CD8-positive, alpha-beta T cell (primary cell): ENCODE measurements at regions of chr13 and their contacts with region 1.

Region 1: GRCh38 chr13:99386911-99387788 is 80.0 kb upstream of the GPR183 start:
- DNase-seq: peak; percentile 77 to 95 (median 87)
- ATAC-seq: peak; percentile 21
- H3K4me3 ChIP-seq: no peak overlapping the region
- H3K4me3 Mint-ChIP-seq: peak overlapping the region; percentile 27
- H3K27ac ChIP-seq: peak overlapping the region in 1 of 2 experiments; percentile 51
- H3K27ac Mint-ChIP-seq: peak overlapping the region; percentile 98
- H3K4me1 ChIP-seq: peaks cover 65% of the 10 kb centered on the region
- H3K4me1 Mint-ChIP-seq: peaks cover 71% of the 10 kb centered on the region
- H3K27me3 ChIP-seq: no peaks in the 10 kb centered on the region
- H3K27me3 Mint-ChIP-seq: no peaks in the 10 kb centered on the region
- CTCF ChIP-seq: peak; percentile 95

Region 2: DNA sequence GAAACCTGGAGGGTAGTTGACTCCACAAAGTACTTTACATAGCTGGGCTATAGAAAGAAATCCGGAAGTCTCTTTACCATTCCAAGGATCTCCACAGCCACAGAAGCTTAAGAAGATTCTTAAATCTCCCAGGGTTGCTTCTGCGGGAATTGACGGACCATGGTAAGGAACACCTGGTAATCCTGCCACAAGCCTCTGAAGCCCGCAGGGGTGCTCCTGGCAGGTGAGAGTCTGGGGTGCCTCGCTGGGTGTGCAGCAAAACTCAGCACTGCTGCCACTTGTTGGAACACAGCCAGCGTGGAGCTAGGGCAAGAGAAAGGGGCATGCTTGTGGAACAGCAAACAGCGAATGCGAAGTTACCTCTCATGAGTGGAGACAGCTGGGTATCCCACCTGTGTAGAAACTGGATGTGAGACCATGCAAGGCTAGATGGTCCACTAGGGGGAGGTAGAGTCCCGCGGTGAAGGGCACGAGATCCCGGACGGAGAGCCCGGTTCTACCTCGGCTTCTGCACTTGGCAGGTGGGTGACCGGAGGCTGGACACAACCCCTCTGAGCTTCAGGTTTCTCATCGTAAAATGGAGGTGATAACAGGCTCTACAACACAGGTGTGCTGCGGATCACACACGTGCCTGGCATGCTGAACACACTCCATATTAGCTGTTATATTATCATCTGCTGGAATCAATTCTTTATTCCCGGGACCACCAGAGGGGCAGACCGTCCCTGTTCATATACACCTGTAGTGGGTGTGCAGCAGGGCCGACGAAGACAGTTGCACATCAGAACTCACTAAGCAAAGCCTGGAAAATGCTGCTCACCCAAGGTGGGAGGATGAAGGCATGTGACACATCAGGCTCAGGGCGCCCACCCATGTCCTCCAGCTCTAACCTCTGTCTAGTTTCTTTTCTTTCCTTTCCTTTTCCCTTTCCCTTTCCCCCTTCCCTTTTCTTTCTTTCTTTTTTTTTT is 210.6 kb before region 1 on chr13:
- CTCF ChIA-PET with region 1: interaction called, 20 read pairs
- POLR2A ChIA-PET with region 1: no interaction called
- intact Hi-C with region 1: loop called (anchors 2 to 5 kb)
- DNase-seq: peak; percentile 58 to 87 (median 82)
- ATAC-seq: peak; percentile 93
- H3K4me3 ChIP-seq: peak overlapping the region in 1 of 2 experiments; percentile 25
- H3K4me3 Mint-ChIP-seq: peak overlapping the region; percentile 72
- H3K27ac ChIP-seq: no peak overlapping the region
- H3K27ac Mint-ChIP-seq: peak overlapping the region; percentile 64
- H3K4me1 ChIP-seq: peaks cover 43% of the 10 kb centered on the region
- H3K4me1 Mint-ChIP-seq: peaks cover 45% of the 10 kb centered on the region
- H3K27me3 ChIP-seq: no peaks in the 10 kb centered on the region
- H3K27me3 Mint-ChIP-seq: no peaks in the 10 kb centered on the region
- CTCF ChIP-seq: peak; percentile 80

Region 3: GRCh38 chr13:99307648-99308339 is 79.4 kb before region 1 on chr13:
- CTCF ChIA-PET with region 1: interaction called, 28 read pairs
- POLR2A ChIA-PET with region 1: interaction called, 11 read pairs
- intact Hi-C with region 1: loop called in 1 of 2 experiments (anchors 2 kb)
- DNase-seq: peak in 5 of 9 experiments; percentile 38 to 63 (median 50)
- ATAC-seq: peak; percentile 57
- H3K4me3 ChIP-seq: peak overlapping the region in 1 of 2 experiments; percentile 53
- H3K4me3 Mint-ChIP-seq: peak overlapping the region; percentile 93
- H3K27ac ChIP-seq: peak overlapping the region; percentile 13 to 65
- H3K27ac Mint-ChIP-seq: peak overlapping the region; percentile 89
- H3K4me1 ChIP-seq: peaks cover 67% of the 10 kb centered on the region
- H3K4me1 Mint-ChIP-seq: peaks cover 81% of the 10 kb centered on the region
- H3K27me3 ChIP-seq: no peaks in the 10 kb centered on the region
- H3K27me3 Mint-ChIP-seq: no peaks in the 10 kb centered on the region
- CTCF ChIP-seq: no peak

Region 4: DNA sequence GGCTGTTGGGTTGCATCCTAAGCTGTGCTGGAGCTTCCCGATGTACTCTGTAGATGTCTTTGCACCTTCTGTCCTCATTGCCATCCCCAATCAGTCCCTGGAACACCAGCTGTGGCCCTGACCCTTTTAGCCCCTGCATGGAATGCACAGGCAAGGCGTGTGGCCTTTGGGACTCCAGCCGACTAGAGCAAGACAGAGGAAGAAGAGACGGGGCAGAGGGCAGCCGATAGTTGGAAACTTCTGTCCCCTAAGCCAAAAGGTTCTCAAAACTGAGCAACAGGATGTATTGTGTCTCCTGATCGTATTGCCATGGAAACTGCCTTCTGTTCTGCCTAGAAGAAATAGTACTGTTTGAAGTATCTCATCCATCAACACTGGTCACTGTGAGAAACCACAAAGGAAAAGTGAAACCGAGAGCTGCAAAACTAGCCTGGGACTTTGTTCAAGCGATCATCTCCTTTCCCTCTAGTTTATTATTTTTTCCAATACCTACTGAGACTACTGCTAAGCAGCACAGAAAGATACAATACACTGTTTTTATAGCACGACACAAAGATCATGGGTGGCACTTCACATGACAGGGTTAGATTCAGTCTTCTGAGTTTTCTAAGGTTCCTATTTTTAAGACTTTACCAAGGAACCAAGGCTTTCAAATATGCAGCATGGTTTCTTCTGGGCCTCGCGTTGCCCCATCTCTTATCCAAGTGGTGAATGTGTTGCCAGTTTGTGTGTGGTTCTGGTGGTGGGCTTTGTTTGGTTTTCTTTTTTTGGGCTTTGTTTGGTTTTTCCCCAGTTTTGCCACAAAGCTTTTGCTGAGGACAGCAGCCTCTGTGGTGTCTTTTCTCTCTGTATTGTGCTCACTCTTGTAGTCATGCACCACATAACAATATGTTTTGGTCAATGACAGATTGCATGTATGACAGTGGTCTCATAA is 30.7 kb before region 1 on chr13:
- CTCF ChIA-PET with region 1: interaction called, 105 read pairs
- POLR2A ChIA-PET with region 1: interaction called, 51 read pairs
- intact Hi-C with region 1: loop called (anchors 1 to 2 kb)
- DNase-seq: peak in 8 of 9 experiments; percentile 41 to 95 (median 66)
- ATAC-seq: peak; percentile 49
- H3K4me3 ChIP-seq: peak overlapping the region in 1 of 2 experiments; percentile 24
- H3K4me3 Mint-ChIP-seq: peak overlapping the region; percentile 55
- H3K27ac ChIP-seq: peak overlapping the region; percentile 81 to 97
- H3K27ac Mint-ChIP-seq: peak overlapping the region; percentile 99
- H3K4me1 ChIP-seq: peaks cover 98% of the 10 kb centered on the region
- H3K4me1 Mint-ChIP-seq: peaks cover 97% of the 10 kb centered on the region
- H3K27me3 ChIP-seq: no peaks in the 10 kb centered on the region
- H3K27me3 Mint-ChIP-seq: no peaks in the 10 kb centered on the region
- CTCF ChIP-seq: no peak

Region 5: DNA sequence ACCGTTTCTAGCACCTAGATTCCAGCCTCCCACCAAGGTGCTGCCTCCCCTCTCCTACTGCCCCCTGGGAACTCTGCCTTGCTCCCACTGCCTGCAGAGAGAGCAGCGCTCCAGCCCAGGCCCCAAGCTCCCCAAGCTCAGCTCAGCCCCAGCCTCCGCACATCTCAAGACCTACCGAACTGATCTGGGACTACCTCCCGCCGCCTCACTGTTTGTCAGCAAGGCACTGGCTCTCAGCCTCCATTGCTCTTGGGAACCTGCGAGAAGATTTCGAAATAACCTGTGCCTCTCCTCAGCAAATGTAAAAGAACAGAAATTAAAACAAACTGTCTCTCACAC is 12.5 kb after region 1 on chr13:
- CTCF ChIA-PET with region 1: interaction called, 26 read pairs
- POLR2A ChIA-PET with region 1: no interaction called
- intact Hi-C with region 1: no loop called
- DNase-seq: no peak
- ATAC-seq: no peak
- H3K4me3 ChIP-seq: no peak overlapping the region
- H3K4me3 Mint-ChIP-seq: no peak overlapping the region
- H3K27ac ChIP-seq: no peak overlapping the region
- H3K27ac Mint-ChIP-seq: peak overlapping the region; percentile 78
- H3K4me1 ChIP-seq: peaks cover 7% of the 10 kb centered on the region
- H3K4me1 Mint-ChIP-seq: peaks cover 43% of the 10 kb centered on the region
- H3K27me3 ChIP-seq: no peaks in the 10 kb centered on the region
- H3K27me3 Mint-ChIP-seq: no peaks in the 10 kb centered on the region
- CTCF ChIP-seq: no peak

Region 6: DNA sequence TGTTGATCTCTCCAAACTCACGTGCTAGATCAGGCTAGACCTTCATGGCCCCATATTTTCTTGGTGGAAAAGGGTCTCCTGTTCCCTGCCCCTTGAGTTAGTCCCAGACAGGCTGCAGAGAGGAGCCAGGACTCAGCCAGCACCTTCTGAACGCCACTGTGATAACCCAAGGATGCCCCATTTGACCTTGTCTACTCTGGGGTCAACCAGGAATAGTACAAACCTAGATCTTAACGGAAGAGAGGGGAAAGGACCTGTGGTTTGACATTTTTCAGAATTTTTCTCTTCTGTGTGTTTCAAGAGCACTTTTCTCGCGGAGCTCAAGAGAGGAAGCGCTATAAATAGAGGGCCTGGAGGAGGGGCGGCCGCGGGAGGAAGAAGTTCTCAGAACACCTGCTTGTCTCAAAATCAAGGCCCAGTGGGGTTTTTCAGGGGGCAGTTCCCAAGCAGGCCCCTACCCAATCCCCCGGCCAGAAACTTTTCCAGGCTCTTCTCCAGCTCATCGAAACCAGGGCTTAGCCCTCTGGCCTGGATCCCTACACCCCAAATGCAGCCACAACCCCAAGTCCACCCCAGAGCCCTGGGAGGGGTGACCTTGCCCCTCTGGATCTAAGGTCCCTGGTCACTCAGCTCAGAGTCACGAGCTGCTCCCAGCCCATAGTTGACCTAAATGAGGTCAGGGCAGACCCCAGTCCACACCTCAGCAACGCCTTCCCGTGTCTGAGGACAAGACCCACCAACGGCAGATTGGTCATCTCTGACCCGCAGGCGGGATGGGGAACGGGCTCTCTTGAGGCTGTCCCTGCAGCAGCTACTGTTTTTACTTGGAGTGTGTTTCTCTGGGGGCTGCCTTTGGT is 38.6 kb after region 1 on chr13:
- CTCF ChIA-PET with region 1: interaction called, 36 read pairs
- POLR2A ChIA-PET with region 1: interaction called, 5 read pairs
- intact Hi-C with region 1: no loop called
- DNase-seq: peak in 8 of 9 experiments; percentile 37 to 71 (median 60)
- ATAC-seq: peak; percentile 56
- H3K4me3 ChIP-seq: peak overlapping the region in 1 of 2 experiments; percentile 28
- H3K4me3 Mint-ChIP-seq: peak overlapping the region; percentile 63
- H3K27ac ChIP-seq: peak overlapping the region; percentile 49 to 73
- H3K27ac Mint-ChIP-seq: peak overlapping the region; percentile 97
- H3K4me1 ChIP-seq: peaks cover 68% of the 10 kb centered on the region
- H3K4me1 Mint-ChIP-seq: peaks cover 60% of the 10 kb centered on the region
- H3K27me3 ChIP-seq: no peaks in the 10 kb centered on the region
- H3K27me3 Mint-ChIP-seq: no peaks in the 10 kb centered on the region
- CTCF ChIP-seq: no peak

Region 7: GRCh38 chr13:100069278-100069677 is 682.1 kb after region 1 on chr13:
- CTCF ChIA-PET with region 1: no interaction called
- POLR2A ChIA-PET with region 1: no interaction called
- intact Hi-C with region 1: no loop called
- DNase-seq: no peak
- ATAC-seq: no peak
- H3K4me3 ChIP-seq: no peak overlapping the region
- H3K4me3 Mint-ChIP-seq: no peak overlapping the region
- H3K27ac ChIP-seq: no peak overlapping the region
- H3K27ac Mint-ChIP-seq: no peak overlapping the region
- H3K4me1 ChIP-seq: no peaks in the 10 kb centered on the region
- H3K4me1 Mint-ChIP-seq: no peaks in the 10 kb centered on the region
- H3K27me3 ChIP-seq: peaks cover 0 to under 1% of the 10 kb centered on the region in 2 experiments
- H3K27me3 Mint-ChIP-seq: peaks cover 8% of the 10 kb centered on the region
- CTCF ChIP-seq: no peak